T-cell (primary cell): ENCODE measurements at regions of chr12 and their contacts with region 1.

Region 1: DNA sequence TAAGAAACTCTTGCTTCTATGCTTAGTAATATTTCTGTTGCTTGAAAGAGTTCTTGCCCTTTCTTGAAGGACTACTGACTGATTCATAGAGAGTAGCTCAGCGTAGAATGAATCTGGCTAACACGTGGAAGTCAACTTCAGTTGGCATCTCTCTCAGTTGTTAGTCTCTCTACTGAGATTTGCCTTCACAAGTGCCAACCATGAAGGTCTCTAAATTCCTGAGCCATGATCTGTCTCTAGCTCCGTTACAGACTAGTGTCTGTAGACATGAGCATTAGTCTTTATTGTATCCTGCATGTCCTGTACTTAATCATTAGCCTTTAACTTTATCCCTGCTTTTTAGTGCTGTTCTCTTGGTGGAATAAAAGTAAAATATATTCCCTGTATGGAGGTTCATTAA is 19.1 kb upstream of the ALX1 start:
- DNase-seq: no peak
- ATAC-seq: no peak
- H3K4me3 ChIP-seq: no peak overlapping the region
- H3K4me3 Mint-ChIP-seq: no peak overlapping the region
- H3K27ac ChIP-seq: no peak overlapping the region
- H3K27ac Mint-ChIP-seq: no peak overlapping the region
- H3K4me1 ChIP-seq: no peaks in the 10 kb centered on the region
- H3K4me1 Mint-ChIP-seq: no peaks in the 10 kb centered on the region
- H3K27me3 ChIP-seq: no peaks in the 10 kb centered on the region
- H3K27me3 Mint-ChIP-seq: no peaks in the 10 kb centered on the region

Region 2: DNA sequence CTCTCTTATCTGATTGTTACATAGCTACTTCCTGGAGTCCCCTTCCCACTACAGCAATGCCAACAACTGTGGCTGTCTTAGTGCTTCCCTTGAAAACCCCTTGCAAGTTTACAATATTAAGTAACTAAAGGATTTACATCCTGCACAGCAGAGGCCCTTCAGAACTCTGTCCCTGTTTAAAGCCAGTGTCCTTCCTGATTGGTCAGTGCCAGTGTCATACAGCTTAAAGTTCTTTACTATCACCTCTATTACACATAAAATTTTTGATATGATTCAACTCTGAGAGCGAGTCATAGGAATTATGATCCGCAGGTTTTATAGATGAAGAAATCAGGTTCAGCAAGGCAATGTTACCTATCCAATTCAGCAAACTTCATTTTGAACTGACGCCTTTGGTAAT is 72.3 kb before region 1 on chr12:
- CTCF ChIA-PET with region 1: no interaction called
- POLR2A ChIA-PET with region 1: interaction called in 1 of 2 experiments, 11 read pairs
- DNase-seq: no peak
- ATAC-seq: no peak
- H3K4me3 ChIP-seq: no peak overlapping the region
- H3K4me3 Mint-ChIP-seq: no peak overlapping the region
- H3K27ac ChIP-seq: no peak overlapping the region
- H3K27ac Mint-ChIP-seq: no peak overlapping the region
- H3K4me1 ChIP-seq: no peaks in the 10 kb centered on the region
- H3K4me1 Mint-ChIP-seq: no peaks in the 10 kb centered on the region
- H3K27me3 ChIP-seq: no peaks in the 10 kb centered on the region
- H3K27me3 Mint-ChIP-seq: no peaks in the 10 kb centered on the region

Region 3: DNA sequence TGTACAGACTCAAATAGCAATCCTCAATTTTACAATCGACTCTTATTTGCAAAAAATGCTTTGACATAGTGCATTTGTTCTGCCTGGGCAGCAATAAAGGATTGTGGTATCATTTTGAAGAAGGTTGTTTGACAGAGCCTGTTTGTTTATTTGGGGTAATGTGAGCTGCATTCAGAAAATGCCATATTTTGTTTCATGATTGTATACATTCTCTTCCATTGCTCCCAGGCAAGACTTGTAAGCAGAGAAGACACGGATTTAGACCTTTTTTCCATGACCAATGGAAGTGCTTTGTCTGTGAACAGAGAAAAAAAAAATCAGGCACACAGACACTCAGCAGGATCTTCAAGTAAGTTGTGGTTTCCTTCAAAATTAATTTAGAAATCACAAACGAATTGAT is 16.3 kb before region 1 on chr12:
- CTCF ChIA-PET with region 1: no interaction called
- POLR2A ChIA-PET with region 1: no interaction called
- DNase-seq: no peak
- ATAC-seq: no peak
- H3K4me3 ChIP-seq: no peak overlapping the region
- H3K4me3 Mint-ChIP-seq: no peak overlapping the region
- H3K27ac ChIP-seq: no peak overlapping the region
- H3K27ac Mint-ChIP-seq: no peak overlapping the region
- H3K4me1 ChIP-seq: no peaks in the 10 kb centered on the region
- H3K4me1 Mint-ChIP-seq: no peaks in the 10 kb centered on the region
- H3K27me3 ChIP-seq: no peaks in the 10 kb centered on the region
- H3K27me3 Mint-ChIP-seq: no peaks in the 10 kb centered on the region